BJ (cell line): ENCODE measurements at regions of chr4 and their contacts with region 1.

Region 1: GRCh38 chr4:83639849-83640493 is 104.1 kb downstream of the GPAT3 start:
- DNase-seq: no peak
- H3K4me3 ChIP-seq: no peak overlapping the region
- H3K27me3 ChIP-seq: peaks cover 5% of the 10 kb centered on the region
- CTCF ChIP-seq: peak; percentile 71

Region 2: DNA sequence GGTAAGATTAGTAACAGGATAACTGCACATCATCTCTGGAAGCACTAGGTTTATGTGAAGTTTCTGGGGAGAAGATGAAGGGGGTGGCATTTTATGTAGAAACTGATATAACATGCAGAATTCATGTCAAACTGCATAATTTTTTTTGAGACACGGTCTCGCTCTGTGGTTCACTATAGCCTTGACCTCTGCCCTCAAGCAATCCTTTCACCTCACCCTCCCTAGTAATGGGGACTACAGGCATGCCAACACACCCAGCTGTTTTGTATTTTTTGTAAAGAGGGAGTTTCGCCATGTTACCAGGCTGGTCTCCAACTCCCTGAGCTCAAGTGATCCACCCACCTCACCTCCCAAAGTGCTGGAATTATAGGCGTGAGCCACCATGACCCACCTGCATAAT is 166.5 kb before region 1 on chr4:
- CTCF ChIA-PET with region 1: no interaction called
- POLR2A ChIA-PET with region 1: no interaction called
- DNase-seq: no peak
- H3K4me3 ChIP-seq: no peak overlapping the region
- H3K27me3 ChIP-seq: no peaks in the 10 kb centered on the region
- CTCF ChIP-seq: no peak

Region 3: GRCh38 chr4:83503974-83504373 is 136.0 kb before region 1 on chr4:
- CTCF ChIA-PET with region 1: interaction called, 54 read pairs
- POLR2A ChIA-PET with region 1: no interaction called
- DNase-seq: no peak
- H3K4me3 ChIP-seq: no peak overlapping the region
- H3K27me3 ChIP-seq: no peaks in the 10 kb centered on the region
- CTCF ChIP-seq: no peak

Region 4: GRCh38 chr4:83510442-83510841 is 129.5 kb before region 1 on chr4:
- CTCF ChIA-PET with region 1: interaction called, 54 read pairs
- POLR2A ChIA-PET with region 1: no interaction called
- DNase-seq: no peak
- H3K4me3 ChIP-seq: no peak overlapping the region
- H3K27me3 ChIP-seq: no peaks in the 10 kb centered on the region
- CTCF ChIP-seq: no peak

Region 5: DNA sequence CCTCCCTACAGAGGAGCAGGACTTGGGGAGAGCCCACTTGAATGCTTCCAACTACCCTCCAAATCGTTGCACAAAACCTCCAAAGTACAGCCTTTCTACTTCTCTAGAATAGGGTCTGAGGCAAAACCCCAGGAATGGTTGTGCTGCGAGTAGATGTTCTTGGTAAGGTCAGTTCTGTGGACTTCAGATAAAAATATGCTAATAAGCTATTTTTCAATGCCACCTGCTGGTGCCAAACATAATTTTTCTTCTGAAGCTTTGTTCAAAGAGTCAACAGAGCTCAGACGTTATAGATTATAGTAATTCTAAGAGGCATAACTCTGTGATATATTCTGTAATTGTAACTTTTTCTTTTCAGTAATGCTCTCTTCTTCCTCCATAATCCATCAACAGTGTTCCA is 321.6 kb after region 1 on chr4:
- CTCF ChIA-PET with region 1: interaction called, 58 read pairs
- POLR2A ChIA-PET with region 1: no interaction called
- DNase-seq: no peak
- H3K4me3 ChIP-seq: no peak overlapping the region
- H3K27me3 ChIP-seq: no peaks in the 10 kb centered on the region
- CTCF ChIP-seq: peak; percentile 35; the same call in 1 of the 2 replicates